ENCODE measurements at regions of chr18 and their contacts with region 1.

Region 1: DNA sequence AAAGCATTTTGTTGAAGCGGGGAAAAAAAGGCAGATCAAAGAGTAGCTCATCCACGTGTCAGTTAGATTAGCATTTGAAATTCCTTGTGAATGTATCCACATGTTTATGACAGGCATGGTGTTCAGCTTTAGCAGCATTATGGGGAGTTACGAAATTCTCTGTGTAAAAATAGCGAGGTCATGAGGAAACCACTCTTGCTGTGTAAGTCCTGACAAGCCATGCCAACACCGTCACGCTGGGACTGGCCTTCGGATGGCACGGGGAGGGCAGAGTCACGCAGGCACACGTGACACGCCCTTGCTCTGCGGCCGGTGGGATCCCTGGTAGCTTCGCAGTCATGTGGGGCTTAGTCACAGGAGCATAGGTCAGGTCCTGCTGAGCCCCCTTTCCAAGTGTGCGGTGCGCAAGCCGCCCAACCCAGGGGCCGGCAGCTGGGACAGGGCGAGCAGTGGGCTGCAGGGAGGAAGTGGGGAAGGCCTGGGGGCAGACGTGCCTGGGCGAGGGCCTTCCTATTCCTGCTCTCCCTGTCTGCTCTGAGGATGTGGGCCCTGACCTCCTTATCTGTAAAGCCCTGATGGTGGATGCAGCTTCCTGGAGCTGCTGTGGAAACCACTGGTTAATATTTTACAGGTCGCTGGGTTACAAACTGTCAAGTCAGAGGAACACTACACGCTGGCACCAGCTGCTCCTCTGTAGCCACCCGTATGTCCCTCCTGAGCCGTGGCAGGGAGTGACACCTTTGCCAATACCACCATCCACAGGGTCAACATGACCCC is 18.0 kb downstream of the MBP start:
- DNase-seq: peak; percentile 97
- H3K4me3 Mint-ChIP-seq: peak overlapping the region; percentile 54
- H3K27ac Mint-ChIP-seq: peak overlapping the region; percentile 96
- H3K4me1 Mint-ChIP-seq: peaks cover 79% of the 10 kb centered on the region
- H3K27me3 Mint-ChIP-seq: no peaks in the 10 kb centered on the region
- CTCF ChIP-seq: no peak

Region 2: DNA sequence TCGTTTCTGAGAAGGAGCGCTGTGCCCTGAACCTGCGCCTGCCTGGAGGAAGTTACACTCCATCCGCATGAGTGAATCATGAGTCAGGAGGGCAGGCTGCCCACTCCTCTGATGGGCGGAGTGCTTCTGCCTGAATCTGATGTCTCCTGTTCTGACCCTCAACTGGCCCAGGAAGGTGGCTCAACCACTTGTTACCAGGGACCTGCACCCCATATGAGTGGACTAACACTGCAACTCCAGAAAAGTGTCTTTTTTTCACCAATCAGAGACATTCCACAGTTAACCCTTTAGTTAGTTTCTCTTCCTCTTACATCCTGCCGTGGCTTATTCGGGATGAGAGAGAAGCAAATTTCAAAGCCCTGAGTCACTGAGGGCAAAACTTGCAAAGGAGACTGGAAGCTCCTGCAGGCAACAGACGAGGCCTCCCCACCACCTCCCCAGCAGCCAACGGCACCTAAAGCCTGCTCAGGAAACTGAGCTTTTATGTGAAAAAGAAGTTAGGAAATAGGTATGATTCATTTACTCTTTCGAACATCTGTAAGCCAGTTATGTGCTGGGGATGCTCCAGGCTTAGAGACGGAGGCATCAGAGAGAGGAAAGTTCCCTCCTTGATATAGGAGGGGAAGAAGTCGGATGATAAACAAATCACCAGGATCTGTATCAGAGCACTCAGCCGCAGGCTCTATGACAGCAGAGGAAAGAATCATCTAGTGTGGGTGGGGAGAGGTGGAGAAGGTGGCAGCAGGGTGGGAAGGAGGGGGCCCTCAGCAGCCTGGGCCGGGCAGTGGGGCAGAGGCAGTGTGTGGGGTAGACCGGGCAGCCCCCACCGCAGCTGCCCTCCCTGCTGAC is 13.0 kb before region 1 on chr18:
- CTCF ChIA-PET with region 1: interaction called, 20 read pairs
- intact Hi-C with region 1: loop called (anchors 1 kb)
- DNase-seq: peak; percentile 94
- H3K4me3 Mint-ChIP-seq: peak overlapping the region; percentile 57
- H3K27ac Mint-ChIP-seq: peak overlapping the region; percentile 94
- H3K4me1 Mint-ChIP-seq: peaks cover 81% of the 10 kb centered on the region
- H3K27me3 Mint-ChIP-seq: no peaks in the 10 kb centered on the region
- CTCF ChIP-seq: no peak

Region 3: DNA sequence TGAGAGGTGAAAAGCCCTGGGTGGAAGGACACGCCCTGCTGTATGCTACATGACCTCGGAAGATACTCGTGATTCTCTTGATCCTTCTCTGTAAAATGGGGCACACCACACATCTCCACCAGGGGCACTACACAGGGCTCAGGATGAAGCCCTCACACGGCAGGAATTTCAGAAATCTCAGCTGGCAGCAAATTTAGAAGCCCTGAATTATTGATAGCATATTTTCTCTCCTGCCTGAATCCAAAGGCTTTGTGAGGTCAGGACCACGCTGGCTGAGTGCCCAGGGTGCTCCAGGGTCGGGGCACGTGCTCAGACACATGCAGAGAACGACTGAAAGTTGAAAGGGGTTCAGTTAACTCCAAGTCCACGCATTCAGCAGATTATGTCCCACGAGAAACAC is 92.9 kb after region 1 on chr18:
- CTCF ChIA-PET with region 1: interaction called, 12 read pairs
- intact Hi-C with region 1: no loop called
- DNase-seq: peak; percentile 87
- H3K4me3 Mint-ChIP-seq: no peak overlapping the region
- H3K27ac Mint-ChIP-seq: no peak overlapping the region
- H3K4me1 Mint-ChIP-seq: peaks cover 20% of the 10 kb centered on the region
- H3K27me3 Mint-ChIP-seq: peaks cover 27% of the 10 kb centered on the region
- CTCF ChIP-seq: peak; percentile 98